ENCODE measurements at regions of chr2 and their contacts with region 1.

Region 1: DNA sequence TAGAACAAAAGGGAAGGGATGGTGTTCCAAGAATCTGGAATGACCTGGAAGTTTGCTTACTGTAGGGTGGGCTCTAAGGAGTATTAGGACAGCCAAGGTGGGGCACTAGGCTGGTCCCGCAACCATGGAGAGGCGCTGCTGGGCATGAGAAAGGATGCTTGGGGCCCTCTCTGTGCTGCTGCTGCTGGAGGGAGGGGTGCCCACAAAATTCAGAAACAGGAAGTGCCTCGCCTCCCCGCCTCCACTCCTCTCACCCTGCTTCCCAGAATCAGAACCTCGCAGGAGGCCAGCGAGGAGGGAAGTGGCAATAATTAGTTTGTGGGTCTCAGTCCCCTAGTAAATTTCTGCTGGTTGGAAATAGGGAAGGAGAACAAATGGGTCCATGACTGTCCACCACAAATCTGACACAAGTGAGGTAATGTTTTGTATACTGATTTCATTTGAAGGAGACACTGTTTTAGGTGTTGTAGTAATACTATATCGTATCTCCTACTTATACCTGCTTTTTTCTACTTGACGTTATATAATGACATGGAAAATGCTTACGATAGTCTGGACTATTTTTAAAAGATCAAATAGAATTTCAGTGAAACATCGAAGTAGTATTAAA is 7.9 kb upstream of the PDCL3 start:
- DNase-seq: no peak
- H3K4me3 ChIP-seq: no peak overlapping the region
- H3K27ac ChIP-seq: no peak overlapping the region
- H3K4me1 ChIP-seq: no peaks in the 10 kb centered on the region
- H3K27me3 ChIP-seq: no peaks in the 10 kb centered on the region
- CTCF ChIP-seq: no peak

Region 2: GRCh38 chr2:100427628-100428258 is 127.2 kb before region 1 on chr2:
- intact Hi-C with region 1: loop called (anchors 10 kb)
- DNase-seq: no peak
- H3K4me3 ChIP-seq: no peak overlapping the region
- H3K27ac ChIP-seq: no peak overlapping the region
- H3K4me1 ChIP-seq: peaks cover 0 to 12% (median 0%) of the 10 kb centered on the region in 4 donors
- H3K27me3 ChIP-seq: no peaks in the 10 kb centered on the region
- CTCF ChIP-seq: peak in 1 of 2 experiments; percentile 11

Measured in tibial artery (tissue), 4 donors.